Calu3 (cell line): ENCODE measurements at regions of chr5 and their contacts with region 1.

Region 1: DNA sequence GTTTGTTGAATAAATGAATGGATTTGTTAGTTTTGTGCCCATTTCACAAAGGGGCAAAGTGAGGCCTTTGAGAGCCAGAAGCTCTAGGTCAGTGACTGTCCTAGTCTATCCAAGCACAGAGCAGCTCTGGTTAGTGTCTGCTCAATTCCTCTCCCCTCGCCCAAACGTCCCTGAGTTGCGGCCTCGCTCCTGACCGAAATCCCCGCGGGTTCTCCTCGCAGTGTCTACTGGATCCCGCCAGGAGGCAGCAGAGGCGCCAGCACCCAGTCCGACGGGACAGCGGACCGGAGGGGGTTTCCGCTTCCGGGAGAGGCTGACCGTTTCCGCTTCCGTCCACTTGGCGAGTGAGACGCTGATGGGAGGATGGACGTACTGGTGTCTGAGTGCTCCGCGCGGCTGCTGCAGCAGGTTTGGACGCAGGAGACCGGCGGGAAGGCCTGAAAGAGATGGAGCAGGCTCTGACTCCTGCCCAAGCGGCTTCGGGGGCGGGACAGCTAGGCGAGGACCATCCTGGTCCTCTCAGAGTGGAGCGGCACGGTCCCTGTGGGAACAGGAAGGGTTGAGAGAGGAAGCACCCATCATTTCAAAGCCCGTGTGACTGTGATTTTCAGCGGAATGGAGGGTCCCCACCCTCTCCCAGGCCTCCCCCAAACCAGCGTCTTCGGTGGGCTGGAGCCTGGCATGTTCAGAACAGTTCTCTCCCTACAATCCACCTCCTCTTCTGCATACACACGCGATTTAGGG is at the start of gene RARS1:
- DNase-seq: peak; percentile 97
- H3K4me3 Mint-ChIP-seq: peak within 1 kb of the TSS; percentile 100
- H3K27ac Mint-ChIP-seq: peak within 1 kb of the TSS; percentile 95
- H3K4me1 Mint-ChIP-seq: peaks cover 25% of the 10 kb centered on the region
- H3K27me3 Mint-ChIP-seq: no peaks in the 10 kb centered on the region
- CTCF ChIP-seq: peak; percentile 98
- total RNA-seq, gene RARS1: 130 and 137 TPM in 2 replicates

Region 2: GRCh38 chr5:168291464-168291961 is 194.8 kb before region 1 on chr5 and contains the start of gene WWC1:
- CTCF ChIA-PET with region 1: no interaction called
- intact Hi-C with region 1: no loop called
- DNase-seq: peak; percentile 99
- H3K4me3 Mint-ChIP-seq: peak within 1 kb of the TSS; percentile 97
- H3K27ac Mint-ChIP-seq: peak within 1 kb of the TSS; percentile 85
- H3K4me1 Mint-ChIP-seq: peaks cover 81% of the 10 kb centered on the region
- H3K27me3 Mint-ChIP-seq: no peaks in the 10 kb centered on the region
- CTCF ChIP-seq: peak; percentile 30
- total RNA-seq, gene WWC1: 190 TPM in 2 replicates

Region 3: DNA sequence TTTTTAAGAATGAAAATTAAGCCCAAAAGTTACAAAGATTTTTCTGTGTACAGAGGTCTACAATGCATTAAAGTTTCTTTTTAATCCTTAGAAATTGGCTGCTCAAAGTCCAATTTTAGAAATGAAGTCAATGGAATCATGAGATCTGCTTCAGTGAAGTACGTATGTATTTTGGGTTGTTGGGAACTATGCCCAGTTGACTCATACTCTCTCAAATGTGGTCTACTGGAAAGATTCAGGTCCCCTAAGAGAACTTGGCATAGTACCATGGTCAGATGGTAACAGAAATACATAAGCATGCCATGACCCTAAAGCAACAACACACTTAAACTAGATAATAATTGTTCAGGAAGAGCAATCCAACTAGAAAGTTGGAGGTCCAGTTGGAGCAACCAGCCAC is 65.8 kb after region 1 on chr5:
- CTCF ChIA-PET with region 1: no interaction called
- intact Hi-C with region 1: no loop called
- DNase-seq: no peak
- H3K4me3 Mint-ChIP-seq: no peak overlapping the region
- H3K27ac Mint-ChIP-seq: no peak overlapping the region
- H3K4me1 Mint-ChIP-seq: no peaks in the 10 kb centered on the region
- H3K27me3 Mint-ChIP-seq: no peaks in the 10 kb centered on the region
- CTCF ChIP-seq: no peak

Region 4: GRCh38 chr5:168656633-168657032 is 170.3 kb after region 1 on chr5:
- CTCF ChIA-PET with region 1: interaction called, 4 read pairs
- intact Hi-C with region 1: loop called (anchors 5 kb)
- DNase-seq: peak; percentile 8
- H3K4me3 Mint-ChIP-seq: no peak overlapping the region
- H3K27ac Mint-ChIP-seq: peak overlapping the region; percentile 79
- H3K4me1 Mint-ChIP-seq: peaks cover 40% of the 10 kb centered on the region
- H3K27me3 Mint-ChIP-seq: no peaks in the 10 kb centered on the region
- CTCF ChIP-seq: no peak